ENCODE measurements at regions of chr7 and their contacts with region 1.

Region 1: GRCh38 chr7:130896898-130897514 is 163.0 kb upstream of the KLF14 start:
- DNase-seq: peak; percentile 84

Region 2: GRCh38 chr7:131007394-131008330 is 110.7 kb after region 1 on chr7:
- intact Hi-C with region 1: loop called (anchors 2 kb)
- DNase-seq: no peak

Region 3: GRCh38 chr7:131225619-131226513 is 328.9 kb after region 1 on chr7:
- intact Hi-C with region 1: no loop called
- DNase-seq: no peak

Region 4: GRCh38 chr7:131302876-131303707 is 406.1 kb after region 1 on chr7:
- intact Hi-C with region 1: loop called (anchors 10 kb)
- DNase-seq: no peak

Measured in cardiac septum (tissue), 1 donor.